SK-N-SH (cell line): ENCODE measurements at regions of chr7 and their contacts with region 1.

Region 1: DNA sequence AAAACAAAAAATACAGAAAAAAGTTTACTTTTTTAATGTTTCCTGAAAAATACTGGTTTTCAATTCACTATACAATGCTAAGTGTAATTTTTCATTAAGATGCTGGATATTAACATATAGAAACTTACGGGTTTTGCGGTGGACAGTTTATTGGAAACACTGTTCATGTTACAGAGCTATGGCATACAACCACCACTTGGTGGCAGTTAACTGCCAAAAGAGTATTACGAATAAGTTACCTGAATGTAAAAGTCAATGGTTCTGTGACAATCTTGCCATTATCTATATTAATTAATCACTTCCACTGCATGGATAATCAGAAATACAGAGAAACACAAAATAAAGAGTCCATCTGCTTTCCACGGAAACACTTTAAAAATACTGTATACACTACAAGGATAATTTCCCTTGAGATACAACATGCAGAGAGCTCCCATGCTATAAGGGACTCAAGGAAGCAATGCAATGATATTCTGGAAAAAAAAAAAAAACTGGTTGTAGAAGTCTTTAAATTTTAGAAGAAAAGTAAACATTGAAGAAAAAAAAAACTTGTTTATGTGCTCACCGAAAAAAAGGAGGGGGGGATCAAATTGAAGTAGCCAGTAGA is 97.0 kb downstream of the TPK1 start:
- DNase-seq: peak; percentile 15
- H3K4me3 ChIP-seq: no peak overlapping the region
- H3K27ac ChIP-seq: no peak overlapping the region
- H3K4me1 ChIP-seq: no peaks in the 10 kb centered on the region
- H3K27me3 ChIP-seq: no peaks in the 10 kb centered on the region
- CTCF ChIP-seq: peak; percentile 96
- EP300 ChIP-seq: no peak
- RAD21 ChIP-seq: peak; percentile 65

Region 2: GRCh38 chr7:144416341-144416740 is 322.5 kb before region 1 on chr7:
- CTCF ChIA-PET with region 1: no interaction called
- POLR2A ChIA-PET with region 1: no interaction called
- DNase-seq: no peak
- H3K4me3 ChIP-seq: no peak overlapping the region
- H3K27ac ChIP-seq: no peak overlapping the region
- H3K4me1 ChIP-seq: no peaks in the 10 kb centered on the region
- H3K27me3 ChIP-seq: peaks cover 1% of the 10 kb centered on the region; the same call in 1 of the 2 replicates
- CTCF ChIP-seq: no peak
- EP300 ChIP-seq: no peak
- RAD21 ChIP-seq: no peak

Region 3: DNA sequence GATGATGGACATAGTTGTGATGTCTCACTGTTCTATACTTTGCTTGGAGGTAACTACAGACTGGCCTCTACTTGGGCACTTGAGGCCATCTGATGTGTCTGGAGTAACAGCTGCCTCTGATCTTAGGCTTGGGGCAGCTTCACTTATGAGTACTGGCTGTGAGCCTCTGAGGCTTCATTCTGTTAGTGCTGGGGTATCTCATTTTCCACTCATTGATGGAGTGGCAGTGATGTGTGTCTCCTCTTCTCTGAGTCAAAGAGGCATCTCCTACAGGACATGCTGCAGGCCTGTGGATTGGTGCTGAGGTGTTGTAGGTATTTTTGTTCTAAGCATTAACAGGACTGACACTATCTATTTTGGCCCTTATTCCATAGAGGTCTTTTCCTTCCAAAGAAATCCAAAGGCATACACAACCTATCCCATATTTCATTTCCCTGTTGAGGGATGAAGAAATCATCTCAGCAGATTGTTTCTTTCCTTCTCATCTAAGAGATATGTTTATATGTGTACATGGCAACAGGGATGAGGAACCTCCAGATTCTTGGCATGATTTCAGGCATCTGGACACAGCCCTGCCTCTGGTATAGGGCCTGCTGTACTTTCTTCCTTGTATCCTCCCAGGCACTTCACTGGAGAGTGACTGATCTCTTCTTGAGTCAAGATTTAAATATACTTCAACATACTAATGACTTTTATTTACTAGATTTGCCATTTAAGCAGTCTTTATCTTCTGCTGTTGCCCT is 269.6 kb before region 1 on chr7:
- CTCF ChIA-PET with region 1: no interaction called
- POLR2A ChIA-PET with region 1: no interaction called
- DNase-seq: no peak
- H3K4me3 ChIP-seq: no peak overlapping the region
- H3K27ac ChIP-seq: no peak overlapping the region
- H3K4me1 ChIP-seq: no peaks in the 10 kb centered on the region
- H3K27me3 ChIP-seq: no peaks in the 10 kb centered on the region
- CTCF ChIP-seq: no peak
- EP300 ChIP-seq: no peak
- RAD21 ChIP-seq: no peak

Region 4: GRCh38 chr7:144728551-144728950 is 10.3 kb before region 1 on chr7:
- CTCF ChIA-PET with region 1: interaction called, 14 read pairs
- POLR2A ChIA-PET with region 1: no interaction called
- DNase-seq: no peak
- H3K4me3 ChIP-seq: no peak overlapping the region
- H3K27ac ChIP-seq: no peak overlapping the region
- H3K4me1 ChIP-seq: no peaks in the 10 kb centered on the region
- H3K27me3 ChIP-seq: no peaks in the 10 kb centered on the region
- CTCF ChIP-seq: no peak
- EP300 ChIP-seq: no peak
- RAD21 ChIP-seq: no peak

Region 5: DNA sequence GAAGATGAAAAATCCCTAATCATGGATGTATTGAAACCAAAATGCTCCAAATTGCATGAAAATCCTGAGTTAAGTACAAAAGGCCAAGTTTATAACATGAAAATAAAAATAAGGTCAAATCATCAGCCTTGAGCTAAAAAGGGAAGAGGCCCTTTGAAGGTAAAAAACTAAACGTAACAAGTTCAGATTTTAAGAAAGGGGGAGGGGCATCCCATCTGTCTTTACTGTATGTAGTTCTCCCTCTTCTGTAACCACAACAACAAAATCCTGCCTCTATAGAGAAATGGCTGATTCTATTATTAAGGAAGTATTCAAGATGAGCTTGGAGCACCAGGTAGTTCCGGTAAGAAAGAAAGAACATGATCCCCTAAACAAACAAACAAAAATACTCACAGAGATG is 32.4 kb after region 1 on chr7:
- CTCF ChIA-PET with region 1: interaction called, 17 read pairs
- POLR2A ChIA-PET with region 1: no interaction called
- DNase-seq: no peak
- H3K4me3 ChIP-seq: no peak overlapping the region
- H3K27ac ChIP-seq: no peak overlapping the region
- H3K4me1 ChIP-seq: no peaks in the 10 kb centered on the region
- H3K27me3 ChIP-seq: no peaks in the 10 kb centered on the region
- CTCF ChIP-seq: no peak
- EP300 ChIP-seq: no peak
- RAD21 ChIP-seq: no peak